PC-3 (cell line): ENCODE measurements at regions of chr1 and their contacts with region 1.

Region 1: GRCh38 chr1:9292361-9293240 is at the start of gene SPSB1:
- DNase-seq: peak; percentile 78
- ATAC-seq: peak; percentile 42
- H3K4me3 ChIP-seq: peak within 1 kb of the TSS; percentile 95
- H3K27ac ChIP-seq: peak within 1 kb of the TSS; percentile 85
- H3K4me1 ChIP-seq: peaks cover 41% of the 10 kb centered on the region
- H3K27me3 ChIP-seq: no peaks in the 10 kb centered on the region
- CTCF ChIP-seq: no peak
- total RNA-seq, gene SPSB1: 18.1 and 32.9 TPM in 2 replicates

Region 2: DNA sequence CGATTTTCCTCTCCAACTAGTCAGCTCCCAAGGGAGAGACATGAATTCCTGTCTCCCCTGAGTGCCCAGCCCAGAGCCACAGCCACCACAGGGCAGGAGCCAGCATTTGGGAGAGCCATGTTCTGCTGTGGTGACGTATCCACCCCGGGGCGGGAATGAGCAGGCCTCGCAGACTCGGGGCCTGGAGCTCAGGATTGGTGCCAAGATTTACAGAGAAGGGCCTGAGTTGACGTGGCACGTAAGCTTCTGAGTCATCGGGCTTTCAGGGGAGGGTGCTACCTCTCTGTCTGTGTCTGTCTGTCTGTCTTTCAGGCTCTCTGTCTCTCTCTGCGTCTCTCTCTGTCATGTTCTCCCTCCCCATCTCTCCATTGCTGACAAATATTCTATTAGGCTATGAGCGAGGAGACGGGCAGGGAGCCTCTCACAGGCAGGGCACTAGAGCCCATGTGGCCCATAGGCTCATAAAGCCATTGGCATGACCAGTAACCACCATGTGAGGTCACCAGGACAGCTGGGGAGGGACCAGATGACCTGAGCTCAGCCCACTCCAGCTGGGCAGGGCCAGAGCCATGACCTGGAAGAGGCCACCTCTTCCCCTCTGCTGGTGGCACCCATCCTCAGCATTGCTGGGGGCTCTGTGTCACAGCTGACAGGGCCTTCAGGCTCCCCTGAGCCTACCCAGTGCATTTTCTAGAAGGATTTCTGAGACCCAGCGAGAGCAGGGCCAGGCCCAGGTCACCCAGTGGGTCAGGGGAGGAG is 1821.5 kb before region 1 on chr1:
- CTCF ChIA-PET with region 1: no interaction called
- POLR2A ChIA-PET with region 1: no interaction called
- intact Hi-C with region 1: no loop called
- DNase-seq: peak; percentile 95
- ATAC-seq: peak; percentile 91
- H3K4me3 ChIP-seq: no peak overlapping the region
- H3K27ac ChIP-seq: peak overlapping the region; percentile 44
- H3K4me1 ChIP-seq: peaks cover 12% of the 10 kb centered on the region
- H3K27me3 ChIP-seq: 0 out of 2 replicates have a peak, but pooled peaks cover 1% of the 10 kb centered on the region
- CTCF ChIP-seq: no peak

Region 3: DNA sequence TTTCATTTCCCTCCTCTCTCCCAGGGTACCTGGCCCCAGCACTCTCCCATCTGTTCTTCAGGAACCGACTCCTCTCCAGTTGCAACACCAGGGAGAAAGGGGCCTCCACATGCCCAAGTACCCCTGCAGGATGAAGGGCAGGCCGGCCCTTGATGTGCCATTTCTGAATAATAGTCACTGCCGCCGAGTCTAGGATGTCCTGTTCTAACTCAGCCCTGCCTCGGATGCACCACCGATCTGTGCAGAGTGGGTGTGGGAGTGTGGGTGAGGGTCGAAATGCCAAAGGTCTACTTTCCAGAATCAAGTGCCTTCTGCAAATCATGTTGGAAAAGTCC is 25.3 kb before region 1 on chr1:
- CTCF ChIA-PET with region 1: interaction called, 6 read pairs
- POLR2A ChIA-PET with region 1: no interaction called
- intact Hi-C with region 1: loop called (anchors 1 kb)
- DNase-seq: no peak
- ATAC-seq: no peak
- H3K4me3 ChIP-seq: no peak overlapping the region
- H3K27ac ChIP-seq: no peak overlapping the region
- H3K4me1 ChIP-seq: peaks cover 24% of the 10 kb centered on the region
- H3K27me3 ChIP-seq: no peaks in the 10 kb centered on the region
- CTCF ChIP-seq: 0 out of 2 replicates have a peak, but pooled peaks have one; percentile 5

Region 4: DNA sequence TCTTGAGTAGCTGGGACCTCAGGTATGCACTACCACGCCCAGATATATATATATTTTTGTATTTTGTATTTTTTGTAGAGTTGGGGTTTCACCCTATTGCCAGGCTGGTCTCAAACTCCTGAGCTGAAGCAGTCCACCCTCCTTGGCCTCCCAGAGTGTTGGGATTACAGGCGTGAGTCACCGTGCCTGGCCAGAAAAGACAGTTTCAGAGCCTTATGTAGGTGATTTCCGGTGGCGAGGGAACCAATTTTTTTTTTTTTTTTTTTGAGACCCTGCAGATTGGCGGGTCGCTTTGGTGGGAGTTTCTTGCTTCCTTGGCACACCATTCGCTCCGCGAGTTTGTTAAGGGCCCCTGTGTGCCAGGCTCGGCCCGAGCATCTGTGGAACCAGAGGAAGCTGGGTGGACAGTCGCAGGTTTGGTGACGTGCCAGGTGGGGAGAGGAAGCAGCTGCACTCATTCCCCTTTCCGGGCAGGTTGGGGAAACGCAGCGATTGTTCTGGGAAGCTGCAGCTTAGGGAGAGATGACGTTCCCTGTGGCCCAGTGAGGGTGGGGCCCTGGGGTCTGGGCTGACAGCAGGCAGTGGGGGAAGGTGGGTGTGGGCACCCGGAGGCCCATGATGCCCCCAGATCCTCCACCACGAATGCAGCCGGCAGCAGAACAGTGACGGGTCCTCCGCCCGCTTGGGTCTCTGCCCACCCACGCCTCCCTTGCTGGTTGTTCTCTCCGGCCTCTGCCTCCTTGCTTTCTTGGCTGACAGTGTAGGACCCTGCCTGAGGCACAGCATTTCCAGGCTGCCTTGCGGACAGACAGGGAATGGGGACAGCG is 25.2 kb after region 1 on chr1:
- CTCF ChIA-PET with region 1: no interaction called
- POLR2A ChIA-PET with region 1: no interaction called
- intact Hi-C with region 1: no loop called
- DNase-seq: peak; percentile 37
- ATAC-seq: peak; percentile 72
- H3K4me3 ChIP-seq: no peak overlapping the region
- H3K27ac ChIP-seq: peak overlapping the region; percentile 52; the same call in 1 of the 2 replicates
- H3K4me1 ChIP-seq: peaks cover 6% of the 10 kb centered on the region; the same call in 1 of the 2 replicates
- H3K27me3 ChIP-seq: no peaks in the 10 kb centered on the region
- CTCF ChIP-seq: no peak

Region 5: GRCh38 chr1:9428601-9429341 is 136.2 kb after region 1 on chr1:
- CTCF ChIA-PET with region 1: no interaction called
- POLR2A ChIA-PET with region 1: no interaction called
- intact Hi-C with region 1: loop called (anchors 5 kb)
- DNase-seq: peak; percentile 99
- ATAC-seq: peak; percentile 95
- H3K4me3 ChIP-seq: peak overlapping the region; percentile 60
- H3K27ac ChIP-seq: no peak overlapping the region
- H3K4me1 ChIP-seq: peaks cover 13% of the 10 kb centered on the region
- H3K27me3 ChIP-seq: no peaks in the 10 kb centered on the region
- CTCF ChIP-seq: no peak

Region 6: DNA sequence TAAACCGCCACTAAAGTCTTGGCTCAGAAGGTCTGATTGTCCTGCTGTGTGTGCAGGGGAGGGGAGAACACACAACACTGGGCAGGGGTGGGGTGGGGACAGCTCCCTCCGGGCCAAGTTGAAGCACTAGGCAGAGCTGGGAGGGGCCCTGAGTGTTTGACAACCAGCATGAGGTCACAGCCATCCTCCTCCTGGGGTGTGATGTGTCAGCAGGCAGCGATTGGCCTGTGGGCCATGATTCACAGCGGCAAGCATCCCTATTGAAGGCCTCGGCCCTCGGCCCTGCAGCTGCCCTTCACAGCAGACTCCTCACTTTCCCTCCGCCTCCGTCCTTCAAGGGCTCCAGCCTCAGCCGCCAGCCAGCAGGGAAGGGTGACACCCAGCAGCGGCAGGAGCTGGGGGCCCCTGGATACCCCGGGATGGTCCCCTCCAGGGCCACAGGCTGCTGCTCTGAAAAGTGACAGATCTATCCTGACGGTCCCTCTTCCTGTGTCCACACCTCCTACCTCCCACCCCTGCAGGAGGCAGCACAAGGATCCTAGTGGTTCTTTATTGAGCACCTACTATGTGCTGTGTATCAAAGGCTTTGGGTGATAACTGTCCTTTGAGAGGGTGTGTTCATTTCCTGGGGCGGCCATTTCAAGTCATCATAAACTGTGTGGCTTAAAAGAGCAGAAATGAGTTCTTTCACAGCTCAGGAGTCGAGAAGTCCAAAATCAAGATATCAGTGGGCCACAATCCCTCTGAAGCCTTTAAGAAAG is 180.6 kb after region 1 on chr1:
- CTCF ChIA-PET with region 1: no interaction called
- POLR2A ChIA-PET with region 1: no interaction called
- intact Hi-C with region 1: loop called (anchors 5 kb)
- DNase-seq: peak; percentile 90
- ATAC-seq: peak; percentile 94
- H3K4me3 ChIP-seq: no peak overlapping the region
- H3K27ac ChIP-seq: no peak overlapping the region
- H3K4me1 ChIP-seq: peaks cover 25% of the 10 kb centered on the region
- H3K27me3 ChIP-seq: no peaks in the 10 kb centered on the region
- CTCF ChIP-seq: no peak

Region 7: DNA sequence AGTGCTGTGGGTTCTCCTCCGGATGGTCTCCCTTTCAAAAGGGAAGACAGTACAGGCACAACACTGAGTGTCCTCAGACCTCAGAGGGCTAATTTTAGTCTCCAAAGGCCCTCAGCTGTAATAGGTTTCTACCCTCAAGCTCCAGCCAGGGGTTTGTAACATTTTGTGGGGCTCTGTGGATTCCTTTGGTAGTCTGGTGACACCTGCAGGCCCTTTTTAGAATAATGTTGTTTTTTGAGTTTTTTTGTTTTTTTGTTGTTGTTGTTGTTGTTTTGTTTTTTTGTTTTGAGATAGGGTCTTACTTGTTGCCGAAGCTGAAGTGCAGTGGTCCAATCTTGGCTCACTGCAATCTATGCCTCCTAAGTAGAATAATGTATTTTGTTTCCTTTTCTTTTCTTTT is 281.1 kb after region 1 on chr1:
- CTCF ChIA-PET with region 1: no interaction called
- POLR2A ChIA-PET with region 1: no interaction called
- intact Hi-C with region 1: loop called (anchors 5 kb)
- DNase-seq: peak; percentile 35
- ATAC-seq: no peak
- H3K4me3 ChIP-seq: no peak overlapping the region
- H3K27ac ChIP-seq: no peak overlapping the region
- H3K4me1 ChIP-seq: no peaks in the 10 kb centered on the region
- H3K27me3 ChIP-seq: no peaks in the 10 kb centered on the region
- CTCF ChIP-seq: peak; percentile 61